Cardiac septum (tissue), 1 donor: ENCODE measurements at regions of chr3 and their contacts with region 1.

Region 1: DNA sequence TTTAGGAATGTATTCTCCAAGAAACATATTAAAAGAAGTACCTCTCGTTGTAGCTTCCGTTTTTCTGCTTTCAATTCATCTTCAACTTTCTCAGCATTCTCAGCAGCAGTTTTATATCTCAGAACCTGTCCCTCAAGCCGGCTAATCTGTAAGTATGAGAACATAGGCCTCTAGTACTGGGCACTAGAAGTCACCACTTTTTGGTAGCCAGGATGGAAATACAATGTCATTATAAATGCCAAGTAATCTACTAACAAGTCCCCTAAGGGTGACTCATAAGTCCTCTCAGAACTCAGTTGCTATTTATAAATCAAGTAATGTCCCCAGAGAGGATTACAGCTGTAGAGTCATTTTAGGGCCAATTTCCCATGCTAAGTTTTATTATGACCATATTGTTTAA is 61.1 kb downstream of the MLH1 start:
- DNase-seq: no peak

Region 2: GRCh38 chr3:36562945-36563344 is 491.4 kb before region 1 on chr3:
- intact Hi-C with region 1: no loop called
- DNase-seq: no peak

Region 3: DNA sequence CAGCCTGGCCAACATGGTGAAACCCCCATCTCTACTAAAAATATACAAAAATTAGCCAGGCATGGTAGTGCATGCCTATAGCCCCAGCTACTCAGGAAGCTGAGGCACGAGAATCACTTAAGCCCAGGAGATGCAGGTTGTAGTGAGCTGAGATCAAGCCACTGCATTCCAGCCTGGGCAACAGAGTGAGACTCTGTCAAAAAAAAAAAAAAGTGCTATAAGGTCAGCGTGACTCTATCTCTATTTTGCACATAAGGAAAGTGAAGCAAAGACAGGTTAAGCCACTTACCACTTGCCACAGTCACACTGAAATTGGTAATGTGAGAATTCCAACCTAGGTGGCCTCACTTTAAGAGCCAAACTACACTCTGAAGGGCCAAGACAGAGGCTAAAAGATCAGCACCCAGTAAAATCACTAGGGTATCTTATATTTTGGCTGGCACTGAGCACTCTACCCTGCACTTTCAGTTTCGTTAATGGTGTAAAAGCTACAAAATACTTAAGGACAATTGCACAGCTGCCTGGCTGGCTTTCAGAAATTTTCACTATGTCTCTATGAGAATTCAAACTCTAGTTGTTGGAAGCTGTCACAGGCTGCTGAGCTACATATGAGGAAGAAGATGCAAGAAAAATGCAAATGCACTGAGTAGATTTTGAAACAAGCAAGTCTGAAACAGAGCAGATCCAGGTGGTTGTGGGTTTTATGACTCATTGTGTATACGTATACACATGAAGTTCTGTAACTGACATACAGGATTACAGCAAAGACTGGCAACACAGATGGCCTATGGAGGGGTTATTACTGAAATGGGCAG is 142.2 kb before region 1 on chr3:
- intact Hi-C with region 1: no loop called
- DNase-seq: no peak

Region 4: GRCh38 chr3:37014620-37015019 is 39.8 kb before region 1 on chr3:
- intact Hi-C with region 1: loop called (anchors 5 kb)
- DNase-seq: no peak

Region 5: GRCh38 chr3:37028329-37028728 is 26.0 kb before region 1 on chr3:
- intact Hi-C with region 1: loop called (anchors 2 kb)
- DNase-seq: no peak

Region 6: GRCh38 chr3:37064747-37065146 is 10.4 kb after region 1 on chr3:
- intact Hi-C with region 1: no loop called
- DNase-seq: no peak